ENCODE measurements at regions of chr10 and their contacts with region 1.

Region 1: DNA sequence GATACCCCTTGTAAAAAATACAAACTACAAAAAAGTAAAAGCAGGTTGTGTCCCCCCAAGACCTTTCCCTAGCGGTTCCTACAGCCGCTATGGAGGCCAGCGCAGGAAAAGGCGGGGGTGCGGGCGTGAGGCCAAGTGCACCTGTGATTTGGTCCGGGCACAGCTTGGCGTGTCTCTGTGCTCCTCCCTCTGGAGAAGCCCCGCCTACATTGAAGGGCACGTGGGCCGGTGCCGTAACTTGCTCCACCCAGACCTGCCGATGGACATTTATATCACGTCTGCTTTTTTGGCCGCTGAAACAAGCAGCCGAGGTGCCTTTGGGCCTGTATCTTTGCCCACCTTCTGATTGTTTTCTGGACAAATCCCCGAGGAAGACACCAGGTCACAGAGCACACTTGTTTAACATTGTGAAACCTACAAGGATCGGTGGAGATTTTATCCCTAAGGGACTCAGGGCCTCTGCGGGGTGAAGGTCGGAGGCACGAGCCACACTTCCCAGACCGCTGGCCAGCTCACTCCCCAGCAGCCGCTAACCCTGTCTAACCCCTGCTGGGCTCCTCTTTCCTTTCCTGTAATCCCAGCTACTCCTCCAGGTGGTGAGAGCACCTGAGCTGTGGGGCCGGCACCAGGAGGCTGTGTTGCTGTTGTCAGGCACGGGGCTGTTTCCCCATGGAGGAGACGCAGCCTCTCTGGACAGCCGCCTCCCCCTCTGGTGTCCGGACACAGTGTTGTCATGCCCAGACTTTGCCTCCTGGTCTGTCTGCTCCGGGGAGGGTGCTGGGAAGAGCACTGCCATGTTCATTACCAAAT is 18.8 kb upstream of the INPP5A start:
- DNase-seq: peak; percentile 78
- ATAC-seq: peak; percentile 80
- H3K4me3 Mint-ChIP-seq: peak overlapping the region; percentile 81
- H3K27ac Mint-ChIP-seq: peak overlapping the region; percentile 95
- H3K4me1 Mint-ChIP-seq: peaks cover 32% of the 10 kb centered on the region
- H3K27me3 Mint-ChIP-seq: peaks cover 16% of the 10 kb centered on the region
- CTCF ChIP-seq: no peak

Region 2: GRCh38 chr10:132467464-132468149 is 51.2 kb before region 1 on chr10:
- CTCF ChIA-PET with region 1: interaction called, 12 read pairs
- POLR2A ChIA-PET with region 1: interaction called, 5 read pairs
- DNase-seq: no peak
- ATAC-seq: peak; percentile 52
- H3K4me3 Mint-ChIP-seq: peak overlapping the region; percentile 37
- H3K27ac Mint-ChIP-seq: no peak overlapping the region
- H3K4me1 Mint-ChIP-seq: peaks cover 5% of the 10 kb centered on the region
- H3K27me3 Mint-ChIP-seq: no peaks in the 10 kb centered on the region; the same call in 1 of the 2 replicates
- CTCF ChIP-seq: no peak